CD4-positive, alpha-beta memory T cell (primary cell): ENCODE measurements at regions of chr4 and their contacts with region 1.

Region 1: GRCh38 chr4:15457406-15458201 is 12.1 kb upstream of the CC2D2A start:
- DNase-seq: peak in 4 of 5 donors; percentile 38 to 42 (median 40)
- H3K4me3 ChIP-seq: no peak overlapping the region
- H3K4me3 Mint-ChIP-seq: no peak overlapping the region
- H3K27ac ChIP-seq: no peak overlapping the region
- H3K27ac Mint-ChIP-seq: no peak overlapping the region
- H3K4me1 ChIP-seq: no peaks in the 10 kb centered on the region
- H3K4me1 Mint-ChIP-seq: peaks cover 0 to 2% (median 0%) of the 10 kb centered on the region in 4 donors
- H3K27me3 ChIP-seq: no peaks in the 10 kb centered on the region
- H3K27me3 Mint-ChIP-seq: no peaks in the 10 kb centered on the region

Region 2: DNA sequence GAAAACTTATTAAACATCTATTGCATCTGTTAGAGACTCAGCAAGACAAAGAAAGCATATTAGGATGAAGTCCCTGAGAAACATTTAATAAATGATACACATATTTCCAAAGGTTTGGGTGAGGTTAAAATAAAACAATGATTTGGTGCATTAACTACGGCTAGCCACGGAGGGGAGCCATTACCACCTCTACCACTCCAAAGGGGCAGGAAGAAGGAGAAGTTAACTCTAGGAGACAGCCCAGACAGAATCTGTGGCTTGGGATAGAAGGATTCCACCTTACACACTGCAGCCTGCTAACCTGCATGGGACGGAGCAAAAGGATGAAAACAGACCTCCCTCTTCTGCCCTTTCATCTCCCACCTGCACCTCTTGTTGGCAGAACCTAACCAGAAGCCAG is 218.9 kb before region 1 on chr4:
- CTCF ChIA-PET with region 1: interaction called, 81 read pairs
- POLR2A ChIA-PET with region 1: interaction called, 5 read pairs
- intact Hi-C with region 1: loop called (anchors 1 kb)
- DNase-seq: peak in 2 of 5 donors; percentile 7 to 17
- H3K4me3 ChIP-seq: no peak overlapping the region
- H3K4me3 Mint-ChIP-seq: no peak overlapping the region
- H3K27ac ChIP-seq: no peak overlapping the region
- H3K27ac Mint-ChIP-seq: no peak overlapping the region
- H3K4me1 ChIP-seq: peaks cover 9% of the 10 kb centered on the region
- H3K4me1 Mint-ChIP-seq: peaks cover 6 to 10% (median 9%) of the 10 kb centered on the region in 4 donors
- H3K27me3 ChIP-seq: no peaks in the 10 kb centered on the region
- H3K27me3 Mint-ChIP-seq: peaks cover 0 to 2% of the 10 kb centered on the region in 2 donors

Region 3: DNA sequence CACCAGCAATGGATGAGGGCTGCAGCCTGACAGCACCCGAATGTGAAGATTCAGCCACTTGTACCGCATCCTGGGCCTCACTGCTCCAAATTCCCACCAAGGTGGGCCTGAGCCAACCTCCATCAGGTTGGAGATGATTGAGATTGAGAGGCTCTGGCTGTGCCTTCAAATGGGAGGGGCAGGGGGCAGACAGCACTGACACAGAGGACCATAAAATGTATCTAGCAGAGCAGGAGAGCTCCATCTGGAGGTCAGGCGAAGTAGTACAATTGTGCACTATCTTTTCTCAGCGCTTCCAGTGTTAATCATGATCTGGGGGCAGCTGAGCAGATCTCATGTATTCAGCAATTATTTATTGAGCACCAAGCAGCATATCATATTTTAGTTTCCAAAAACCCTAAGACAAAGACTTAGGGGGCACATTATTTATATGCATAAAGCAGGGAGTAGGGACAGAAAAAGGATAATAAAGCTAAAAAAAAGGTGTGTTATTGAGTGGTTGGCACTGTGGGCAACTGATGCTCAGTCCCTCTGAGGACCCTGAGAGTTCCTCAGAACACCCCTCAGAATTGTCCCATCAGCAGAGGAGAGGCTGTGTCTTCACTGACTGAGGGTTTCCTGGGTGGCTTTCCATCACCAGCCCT is 61.3 kb before region 1 on chr4:
- CTCF ChIA-PET with region 1: interaction called, 23 read pairs
- POLR2A ChIA-PET with region 1: no interaction called
- intact Hi-C with region 1: loop called (anchors 5 kb)
- DNase-seq: peak; percentile 33 to 44 (median 38)
- H3K4me3 ChIP-seq: no peak overlapping the region
- H3K4me3 Mint-ChIP-seq: no peak overlapping the region
- H3K27ac ChIP-seq: no peak overlapping the region
- H3K27ac Mint-ChIP-seq: peak overlapping the region in 1 of 7 donors; percentile 22
- H3K4me1 ChIP-seq: peaks cover 12% of the 10 kb centered on the region
- H3K4me1 Mint-ChIP-seq: peaks cover 10 to 27% (median 22%) of the 10 kb centered on the region in 4 donors
- H3K27me3 ChIP-seq: no peaks in the 10 kb centered on the region
- H3K27me3 Mint-ChIP-seq: no peaks in the 10 kb centered on the region

Region 4: DNA sequence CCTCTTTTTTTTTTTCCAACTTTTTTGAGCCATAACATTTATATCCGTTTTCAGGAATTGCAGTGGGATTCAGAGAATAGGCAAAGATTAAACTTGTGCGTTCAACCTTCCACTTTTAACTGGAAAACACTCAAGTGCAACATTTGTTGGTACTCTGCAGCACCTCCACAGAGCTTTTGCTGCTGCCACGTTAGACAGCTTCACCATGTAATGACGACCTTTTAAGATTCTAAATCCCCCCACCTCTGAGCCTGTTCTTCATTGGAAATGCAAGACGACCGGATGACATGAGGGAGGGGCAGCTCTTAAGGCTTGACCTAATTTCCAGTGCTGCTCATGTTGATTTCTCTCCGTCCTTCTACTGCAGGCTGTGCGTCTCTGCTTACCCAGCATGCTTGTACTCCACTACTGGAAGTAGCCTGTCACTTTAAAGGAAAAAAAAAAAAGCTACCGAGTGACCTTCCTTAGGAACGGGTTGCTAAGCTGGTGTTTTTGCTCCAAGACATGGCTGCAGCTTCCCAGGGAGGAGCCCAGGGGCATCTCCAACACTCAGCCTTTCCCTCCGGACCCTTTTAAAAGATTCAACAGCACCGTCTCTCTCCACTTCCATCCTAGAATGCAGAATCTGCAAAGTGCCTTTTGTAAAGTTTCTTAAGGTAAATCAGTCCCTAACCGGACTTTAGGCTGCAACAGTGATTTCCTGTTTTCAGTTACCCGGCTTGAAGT is 12.0 kb after region 1 on chr4 and contains the start of gene CC2D2A:
- CTCF ChIA-PET with region 1: interaction called, 26 read pairs
- POLR2A ChIA-PET with region 1: no interaction called
- intact Hi-C with region 1: no loop called
- DNase-seq: peak in 1 of 5 donors; percentile 3
- H3K4me3 ChIP-seq: no peak within 1 kb of the TSS
- H3K4me3 Mint-ChIP-seq: peak within 1 kb of the TSS; percentile 58 to 85 (median 77)
- H3K27ac ChIP-seq: no peak within 1 kb of the TSS
- H3K27ac Mint-ChIP-seq: peak within 1 kb of the TSS in 4 of 7 donors; percentile 7 to 68 (median 30)
- H3K4me1 ChIP-seq: peaks cover 7% of the 10 kb centered on the region
- H3K4me1 Mint-ChIP-seq: peaks cover 6 to 13% (median 13%) of the 10 kb centered on the region in 4 donors
- H3K27me3 ChIP-seq: no peaks in the 10 kb centered on the region
- H3K27me3 Mint-ChIP-seq: peaks cover 0 to 5% of the 10 kb centered on the region in 2 donors
- total RNA-seq, gene CC2D2A: 0.22 TPM in 1 of 2 experiments, not detected in the other

Region 5: DNA sequence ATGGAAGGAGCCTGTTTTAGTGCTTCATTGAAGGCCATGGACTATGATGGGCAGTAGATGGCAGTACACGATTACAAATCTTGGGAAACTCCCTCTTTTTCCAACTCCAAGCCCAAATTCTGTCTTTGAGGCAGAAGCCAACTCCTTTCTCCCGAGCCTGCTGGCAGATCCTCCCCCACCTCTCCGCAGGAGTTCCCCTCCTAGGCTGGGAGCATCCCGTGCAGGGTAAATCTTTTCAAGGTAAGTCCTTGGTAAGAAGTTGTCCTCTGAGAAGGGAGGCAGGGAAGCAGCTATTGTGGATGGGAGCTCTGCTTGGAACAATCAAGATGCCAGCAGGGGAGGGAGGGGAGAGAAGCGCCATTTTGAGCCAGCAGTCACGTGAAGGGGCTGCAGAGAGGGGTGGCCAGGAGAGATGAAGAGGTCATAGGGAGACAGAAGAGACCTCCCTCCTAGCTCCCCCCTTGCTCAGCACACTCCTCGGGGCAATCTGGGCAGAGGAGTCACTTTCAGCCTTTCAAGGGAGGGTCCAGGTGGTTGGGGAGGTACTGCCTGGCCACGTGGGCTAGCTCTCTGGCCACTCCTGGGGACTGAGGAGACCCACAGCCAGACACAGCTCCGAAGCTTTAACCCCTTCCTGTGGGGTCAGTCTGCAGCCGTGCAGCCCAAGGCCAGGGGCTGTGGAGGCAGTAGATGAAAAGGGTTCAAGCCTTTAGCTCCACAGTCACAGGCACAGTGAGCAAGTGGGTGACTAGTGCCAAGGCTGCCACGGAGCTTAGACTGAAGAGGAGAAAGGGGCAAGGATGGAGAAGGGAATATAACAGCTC is 21.7 kb after region 1 on chr4:
- CTCF ChIA-PET with region 1: interaction called, 12 read pairs
- POLR2A ChIA-PET with region 1: no interaction called
- intact Hi-C with region 1: no loop called
- DNase-seq: peak in 2 of 5 donors; percentile 6 to 11
- H3K4me3 ChIP-seq: no peak overlapping the region
- H3K4me3 Mint-ChIP-seq: no peak overlapping the region
- H3K27ac ChIP-seq: no peak overlapping the region
- H3K27ac Mint-ChIP-seq: no peak overlapping the region
- H3K4me1 ChIP-seq: no peaks in the 10 kb centered on the region
- H3K4me1 Mint-ChIP-seq: no peaks in the 10 kb centered on the region
- H3K27me3 ChIP-seq: no peaks in the 10 kb centered on the region
- H3K27me3 Mint-ChIP-seq: no peaks in the 10 kb centered on the region

Region 6: DNA sequence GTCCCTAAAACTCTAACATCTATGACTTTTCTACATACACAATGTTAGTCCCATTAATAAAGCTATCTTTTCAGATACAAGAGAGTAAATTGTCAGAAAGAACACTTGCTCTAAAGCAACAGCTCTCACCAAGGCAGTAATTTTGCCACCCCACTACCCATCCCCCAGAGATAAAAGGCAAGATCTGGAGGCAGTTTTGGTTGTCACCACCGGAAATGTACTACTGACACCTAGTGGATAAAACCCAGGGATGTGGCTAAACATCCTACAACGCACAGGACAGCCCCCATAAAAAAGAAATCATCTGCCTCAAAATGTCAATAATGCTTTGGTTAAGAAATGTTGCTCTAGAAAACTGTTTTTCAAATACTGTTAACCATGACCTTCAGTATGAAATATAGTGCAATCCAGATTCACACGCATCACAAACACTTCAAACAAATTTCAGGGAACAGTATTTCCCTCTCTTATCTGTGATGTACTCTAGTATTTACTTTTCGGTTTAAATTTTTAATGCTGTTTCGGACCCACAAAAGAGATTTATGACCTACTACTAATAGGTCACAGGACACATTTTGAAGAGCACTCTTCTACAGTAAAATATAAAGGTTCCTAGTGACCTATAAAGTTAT is 192.4 kb after region 1 on chr4:
- CTCF ChIA-PET with region 1: interaction called, 7 read pairs
- POLR2A ChIA-PET with region 1: no interaction called
- intact Hi-C with region 1: loop called (anchors 1 kb)
- DNase-seq: peak; percentile 74 to 81 (median 75)
- H3K4me3 ChIP-seq: no peak overlapping the region
- H3K4me3 Mint-ChIP-seq: peak overlapping the region in 7 of 8 donors; percentile 1 to 75 (median 36)
- H3K27ac ChIP-seq: no peak overlapping the region
- H3K27ac Mint-ChIP-seq: peak overlapping the region in 6 of 7 donors; percentile 7 to 69 (median 38)
- H3K4me1 ChIP-seq: peaks cover 80% of the 10 kb centered on the region
- H3K4me1 Mint-ChIP-seq: peaks cover 43 to 80% (median 56%) of the 10 kb centered on the region in 4 donors
- H3K27me3 ChIP-seq: no peaks in the 10 kb centered on the region
- H3K27me3 Mint-ChIP-seq: no peaks in the 10 kb centered on the region

Region 7: DNA sequence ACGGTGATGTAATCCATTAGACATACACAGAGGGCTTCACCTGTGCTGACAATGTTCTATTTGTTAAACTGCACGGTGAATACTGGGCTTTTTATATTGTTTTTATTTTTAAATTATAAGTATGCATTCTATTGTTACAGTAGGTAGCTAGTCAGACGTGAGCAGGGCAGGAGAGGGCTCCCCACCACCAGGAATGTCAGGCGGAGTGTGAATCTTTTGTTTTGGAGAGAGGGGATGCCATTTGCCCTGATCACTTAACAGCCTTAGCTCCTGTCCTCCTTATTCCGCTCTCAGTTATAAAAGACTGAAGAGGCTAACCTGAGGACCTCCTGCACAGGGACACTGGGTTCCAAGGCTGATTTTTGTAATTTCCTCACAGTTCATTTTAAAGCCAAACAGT is 920.3 kb after region 1 on chr4:
- CTCF ChIA-PET with region 1: no interaction called
- POLR2A ChIA-PET with region 1: no interaction called
- intact Hi-C with region 1: no loop called
- DNase-seq: no peak
- H3K4me3 ChIP-seq: no peak overlapping the region
- H3K4me3 Mint-ChIP-seq: no peak overlapping the region
- H3K27ac ChIP-seq: no peak overlapping the region
- H3K27ac Mint-ChIP-seq: no peak overlapping the region
- H3K4me1 ChIP-seq: no peaks in the 10 kb centered on the region
- H3K4me1 Mint-ChIP-seq: no peaks in the 10 kb centered on the region
- H3K27me3 ChIP-seq: no peaks in the 10 kb centered on the region
- H3K27me3 Mint-ChIP-seq: peaks cover 3 to 5% of the 10 kb centered on the region in 2 donors